GM18951 (cell line): ENCODE measurements at regions of chr1 and their contacts with region 1.

Region 1: GRCh38 chr1:109404838-109405237 is 7.1 kb upstream of the SORT1 start:
- POLR2A ChIP-seq: no peak

Region 2: DNA sequence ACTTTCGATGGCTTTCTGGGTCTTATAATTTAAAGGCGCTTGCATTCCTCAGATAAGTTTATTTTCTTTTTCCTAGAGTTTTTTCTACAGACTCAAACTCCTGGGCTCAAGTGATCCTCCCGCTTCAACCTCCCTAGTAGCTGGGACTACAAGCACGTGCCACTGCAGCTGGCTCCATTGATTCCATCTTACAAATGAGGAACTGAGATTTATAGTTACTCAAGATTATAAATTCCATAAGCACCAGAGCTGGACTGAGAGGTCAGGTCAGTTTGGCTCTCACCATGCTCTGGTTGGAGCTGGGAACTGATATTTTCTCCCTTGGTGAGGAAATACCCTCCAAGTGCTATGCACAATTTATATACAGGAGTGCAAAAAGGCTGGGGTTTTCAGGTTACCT is 726.1 kb before region 1 on chr1:
- in situ Hi-C with region 1: no loop called
- POLR2A ChIP-seq: no peak

Region 3: GRCh38 chr1:109282952-109283747 is 121.7 kb before region 1 on chr1 and contains the start of gene PSRC1:
- in situ Hi-C with region 1: loop called (anchors 5 kb)
- POLR2A ChIP-seq: peak; percentile 83